ENCODE measurements at regions of chr18 and their contacts with region 1.

Region 1: DNA sequence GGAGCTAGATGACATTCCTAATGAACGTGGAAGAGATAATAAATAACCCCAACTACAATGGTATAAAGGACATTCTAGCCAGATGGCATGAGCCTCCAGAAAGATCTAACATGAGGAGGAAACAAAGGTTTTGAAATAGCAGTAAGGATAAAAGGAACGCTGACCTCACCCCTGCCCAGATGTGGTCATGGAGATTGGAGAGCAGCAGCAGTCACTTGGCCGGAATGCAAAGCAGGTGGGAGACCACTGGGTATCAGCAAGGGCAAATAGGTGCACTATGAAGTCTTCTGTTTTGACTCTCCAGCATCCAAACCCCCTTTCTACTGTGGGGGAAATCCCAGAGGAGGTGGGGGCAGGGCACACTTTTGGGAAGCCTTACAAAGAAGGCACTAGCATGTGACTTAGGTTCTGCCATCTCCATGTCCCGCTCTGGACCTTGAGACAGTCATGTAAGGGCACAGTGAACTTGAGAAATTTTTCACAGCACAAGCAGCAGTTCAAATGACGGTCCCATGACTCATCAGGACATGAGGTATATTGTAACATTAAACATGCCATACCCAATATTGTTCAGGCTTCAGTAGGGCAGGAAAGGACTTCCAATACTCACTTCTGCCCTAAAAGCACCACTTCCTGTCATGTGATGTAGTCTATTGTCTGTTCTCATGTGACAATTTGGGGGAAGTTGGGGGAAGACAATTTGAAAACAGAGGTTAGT is 55.2 kb downstream of the METTL4 start:
- DNase-seq: peak; percentile 96
- H3K4me3 ChIP-seq: no peak overlapping the region
- H3K27ac ChIP-seq: peak overlapping the region; percentile 100
- H3K4me1 ChIP-seq: peaks cover 26% of the 10 kb centered on the region
- H3K27me3 ChIP-seq: no peaks in the 10 kb centered on the region
- CTCF ChIP-seq: no peak
- POLR2A ChIP-seq: peak; percentile 66

Region 2: DNA sequence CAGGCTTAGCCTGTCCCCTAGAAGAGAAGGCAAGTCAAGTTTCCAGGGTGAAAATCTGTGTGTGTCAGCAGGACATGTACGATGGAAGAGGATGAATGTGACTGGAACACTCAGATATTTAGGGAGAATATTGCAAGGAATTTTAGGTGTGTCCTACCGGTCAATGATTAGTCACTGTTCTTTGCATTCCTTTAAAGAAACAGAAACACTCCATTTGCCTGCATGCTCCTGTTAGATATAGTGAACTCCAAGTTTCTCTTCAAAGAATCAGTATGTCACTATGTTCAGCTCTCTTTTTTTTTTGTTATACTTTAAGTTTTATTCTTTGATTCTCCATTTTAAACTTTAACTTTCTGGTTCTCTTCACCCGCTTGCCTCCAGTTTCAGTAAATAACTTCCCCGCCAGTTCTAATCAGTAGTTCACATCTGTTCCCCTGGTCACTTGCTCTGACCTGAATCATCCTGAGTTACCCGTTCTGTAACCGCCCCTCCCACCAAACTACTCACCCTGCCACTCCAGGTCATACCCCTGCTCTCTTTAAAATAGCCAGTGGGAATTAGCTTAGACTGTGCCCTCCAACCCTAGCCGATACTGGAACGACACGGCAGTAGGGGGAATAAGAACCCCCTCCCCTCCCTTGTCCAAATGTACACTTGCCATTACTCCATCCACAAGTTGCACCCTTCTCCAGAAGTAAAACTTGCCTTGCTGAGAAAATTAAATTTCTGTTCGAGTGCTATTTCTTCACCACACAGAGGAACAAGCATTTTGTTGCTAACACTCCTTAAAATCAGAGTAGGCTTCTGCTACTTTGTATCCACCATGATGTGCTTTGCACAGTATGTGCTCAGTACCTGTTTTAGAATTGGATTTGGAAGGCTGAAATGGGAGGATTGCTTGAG is 213.2 kb before region 1 on chr18:
- CTCF ChIA-PET with region 1: no interaction called
- POLR2A ChIA-PET with region 1: no interaction called
- dilution Hi-C with region 1: no loop called
- intact Hi-C with region 1: loop called (anchors 1 kb)
- DNase-seq: peak; percentile 46
- H3K4me3 ChIP-seq: no peak overlapping the region
- H3K27ac ChIP-seq: peak overlapping the region; percentile 78
- H3K4me1 ChIP-seq: peaks cover 42% of the 10 kb centered on the region
- H3K27me3 ChIP-seq: no peaks in the 10 kb centered on the region
- CTCF ChIP-seq: no peak
- POLR2A ChIP-seq: peak; percentile 10

Region 3: GRCh38 chr18:2400701-2401196 is 115.3 kb before region 1 on chr18:
- CTCF ChIA-PET with region 1: no interaction called
- POLR2A ChIA-PET with region 1: no interaction called
- dilution Hi-C with region 1: no loop called
- intact Hi-C with region 1: no loop called
- DNase-seq: no peak
- H3K4me3 ChIP-seq: no peak overlapping the region
- H3K27ac ChIP-seq: no peak overlapping the region
- H3K4me1 ChIP-seq: no peaks in the 10 kb centered on the region
- H3K27me3 ChIP-seq: no peaks in the 10 kb centered on the region
- CTCF ChIP-seq: no peak
- POLR2A ChIP-seq: no peak

Region 4: DNA sequence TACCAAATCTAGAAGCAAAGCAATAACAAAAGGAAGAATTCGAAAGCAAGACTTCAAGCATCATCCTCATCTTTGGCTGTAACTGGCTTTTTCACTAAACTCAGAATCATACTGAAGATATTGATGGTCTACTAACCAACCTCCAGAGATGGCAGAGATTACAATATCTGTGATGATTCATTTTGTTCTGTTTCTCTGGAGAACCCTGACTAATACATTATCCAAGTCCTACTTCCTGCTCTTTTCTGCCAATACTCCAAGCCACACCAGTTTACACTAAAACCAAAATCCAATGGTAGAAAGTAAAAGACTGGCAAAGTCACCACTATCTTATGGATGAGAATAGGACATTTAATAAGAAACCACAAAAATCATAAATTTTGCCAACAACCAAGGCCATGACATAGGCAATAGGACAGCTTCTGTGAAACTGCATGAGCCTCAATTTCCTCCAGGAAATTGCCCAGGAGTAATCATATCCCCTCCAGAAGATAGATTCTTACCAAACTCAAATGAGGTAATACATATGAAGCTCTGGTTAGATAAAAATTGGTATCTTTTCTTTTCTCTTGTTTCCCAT is 104.6 kb before region 1 on chr18:
- CTCF ChIA-PET with region 1: no interaction called
- POLR2A ChIA-PET with region 1: no interaction called
- dilution Hi-C with region 1: no loop called
- intact Hi-C with region 1: loop called (anchors 10 kb)
- DNase-seq: peak; percentile 54
- H3K4me3 ChIP-seq: no peak overlapping the region
- H3K27ac ChIP-seq: no peak overlapping the region
- H3K4me1 ChIP-seq: peaks cover 5% of the 10 kb centered on the region
- H3K27me3 ChIP-seq: no peaks in the 10 kb centered on the region
- CTCF ChIP-seq: no peak
- POLR2A ChIP-seq: no peak

Region 5: GRCh38 chr18:2536493-2536892 is 20.4 kb after region 1 on chr18:
- CTCF ChIA-PET with region 1: interaction called, 13 read pairs
- POLR2A ChIA-PET with region 1: no interaction called
- dilution Hi-C with region 1: no loop called
- intact Hi-C with region 1: loop called (anchors 1 kb)
- DNase-seq: no peak
- H3K4me3 ChIP-seq: no peak overlapping the region
- H3K27ac ChIP-seq: no peak overlapping the region
- H3K4me1 ChIP-seq: no peaks in the 10 kb centered on the region
- H3K27me3 ChIP-seq: no peaks in the 10 kb centered on the region
- CTCF ChIP-seq: no peak
- POLR2A ChIP-seq: no peak

Region 6: DNA sequence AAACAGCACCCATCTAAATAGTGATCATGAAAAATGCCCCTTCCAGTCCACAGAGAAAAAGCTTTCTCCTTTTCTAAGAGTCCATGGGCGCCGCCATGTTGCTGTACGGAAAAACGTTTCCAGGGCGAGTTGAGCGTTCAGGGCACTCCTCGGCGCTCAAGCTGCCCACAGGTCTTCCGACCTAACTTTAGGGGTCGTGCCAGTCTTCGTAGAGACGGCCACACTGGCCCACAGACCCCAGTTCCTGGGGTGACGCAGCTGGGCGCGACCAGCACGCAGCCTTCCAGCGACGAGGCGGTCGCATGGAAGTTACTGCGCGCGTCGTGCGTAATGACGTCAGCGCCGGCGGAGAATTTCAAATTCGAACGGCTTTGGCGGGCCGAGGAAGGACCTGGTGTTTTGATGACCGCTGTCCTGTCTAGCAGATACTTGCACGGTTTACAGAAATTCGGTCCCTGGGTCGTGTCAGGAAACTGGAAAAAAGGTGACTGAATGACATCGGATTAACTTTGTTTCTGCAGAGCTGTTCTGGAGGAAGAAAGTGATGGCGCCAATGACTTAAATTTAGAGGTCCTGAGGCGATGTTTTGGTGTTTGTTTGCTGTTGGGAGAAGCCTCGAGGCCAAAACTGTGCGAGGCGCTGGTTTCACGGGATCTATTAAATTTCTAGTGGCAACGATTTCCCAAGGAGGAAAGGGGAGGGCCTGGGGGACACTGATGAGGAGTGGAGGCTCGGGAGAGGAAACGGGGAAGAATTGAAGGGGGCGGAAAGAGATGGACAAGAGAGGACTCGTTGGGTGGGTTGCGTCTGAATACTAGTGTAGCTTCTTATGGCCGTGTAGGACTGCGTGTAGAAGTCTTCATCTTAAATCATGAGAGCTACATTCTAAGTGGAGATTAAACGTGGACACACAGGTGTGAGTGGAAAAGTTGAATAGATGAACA is 55.4 kb after region 1 on chr18 and contains the starts of genes METTL4 and NDC80:
- CTCF ChIA-PET with region 1: no interaction called
- POLR2A ChIA-PET with region 1: no interaction called
- dilution Hi-C with region 1: no loop called
- intact Hi-C with region 1: loop called (anchors 1 kb)
- DNase-seq: peak; percentile 96
- H3K4me3 ChIP-seq: peak within 1 kb of the TSS; percentile 80 to 92 (median 89)
- H3K27ac ChIP-seq: peak within 1 kb of the TSS; percentile 92
- H3K4me1 ChIP-seq: peaks cover 32% of the 10 kb centered on the region
- H3K27me3 ChIP-seq: no peaks in the 10 kb centered on the region
- CTCF ChIP-seq: no peak
- POLR2A ChIP-seq: no peak
- total RNA-seq, gene METTL4: 16.1 and 17.4 TPM in 2 replicates
- total RNA-seq, gene NDC80: 39.6 and 43.2 TPM in 2 replicates